Ovary (tissue), 10 donors: ENCODE measurements at regions of chr6 and their contacts with region 1.

Region 1: GRCh38 chr6:152848919-152849318 is 98.3 kb downstream of the VIP start:
- DNase-seq: no peak
- H3K4me3 ChIP-seq: no peak overlapping the region
- H3K27ac ChIP-seq: no peak overlapping the region
- H3K4me1 ChIP-seq: no peaks in the 10 kb centered on the region
- H3K27me3 ChIP-seq: no peaks in the 10 kb centered on the region
- CTCF ChIP-seq: no peak
- EP300 ChIP-seq: no peak
- POLR2A ChIP-seq: no peak

Region 2: GRCh38 chr6:152893187-152893586 is 44.3 kb after region 1 on chr6:
- intact Hi-C with region 1: loop called in 1 of 4 experiments (anchors 1 kb)
- DNase-seq: no peak
- H3K4me3 ChIP-seq: no peak overlapping the region
- H3K27ac ChIP-seq: no peak overlapping the region
- H3K4me1 ChIP-seq: no peaks in the 10 kb centered on the region
- H3K27me3 ChIP-seq: no peaks in the 10 kb centered on the region
- CTCF ChIP-seq: no peak
- EP300 ChIP-seq: no peak
- POLR2A ChIP-seq: no peak